GM10248 (cell line): ENCODE measurements at regions of chr17 and their contacts with region 1.

Region 1: GRCh38 chr17:63848834-63849700 is 6.6 kb upstream of the SMARCD2 start:
- DNase-seq: peak; percentile 97
- CTCF ChIP-seq: peak; percentile 84

Region 2: DNA sequence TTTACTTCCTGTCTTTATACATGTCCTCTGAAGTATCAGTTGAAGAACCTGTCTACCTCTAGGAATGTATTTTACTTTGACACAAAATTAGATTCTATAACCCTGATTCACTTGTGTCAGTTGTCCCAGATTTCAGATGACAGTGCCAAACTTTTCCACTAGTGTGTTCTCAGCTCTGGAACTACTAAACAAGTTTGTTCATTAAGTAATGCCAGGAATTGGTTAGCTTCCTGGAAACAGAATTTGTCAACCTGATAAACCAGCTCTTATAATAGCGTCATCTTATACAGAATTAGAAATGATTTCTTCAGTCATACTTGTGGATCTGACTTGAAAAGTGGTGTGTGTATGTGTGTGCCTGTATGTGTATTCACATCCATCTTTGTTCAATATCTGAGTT is 219.4 kb before region 1 on chr17:
- CTCF ChIA-PET with region 1: no interaction called
- POLR2A ChIA-PET with region 1: no interaction called
- DNase-seq: no peak
- CTCF ChIP-seq: no peak

Region 3: DNA sequence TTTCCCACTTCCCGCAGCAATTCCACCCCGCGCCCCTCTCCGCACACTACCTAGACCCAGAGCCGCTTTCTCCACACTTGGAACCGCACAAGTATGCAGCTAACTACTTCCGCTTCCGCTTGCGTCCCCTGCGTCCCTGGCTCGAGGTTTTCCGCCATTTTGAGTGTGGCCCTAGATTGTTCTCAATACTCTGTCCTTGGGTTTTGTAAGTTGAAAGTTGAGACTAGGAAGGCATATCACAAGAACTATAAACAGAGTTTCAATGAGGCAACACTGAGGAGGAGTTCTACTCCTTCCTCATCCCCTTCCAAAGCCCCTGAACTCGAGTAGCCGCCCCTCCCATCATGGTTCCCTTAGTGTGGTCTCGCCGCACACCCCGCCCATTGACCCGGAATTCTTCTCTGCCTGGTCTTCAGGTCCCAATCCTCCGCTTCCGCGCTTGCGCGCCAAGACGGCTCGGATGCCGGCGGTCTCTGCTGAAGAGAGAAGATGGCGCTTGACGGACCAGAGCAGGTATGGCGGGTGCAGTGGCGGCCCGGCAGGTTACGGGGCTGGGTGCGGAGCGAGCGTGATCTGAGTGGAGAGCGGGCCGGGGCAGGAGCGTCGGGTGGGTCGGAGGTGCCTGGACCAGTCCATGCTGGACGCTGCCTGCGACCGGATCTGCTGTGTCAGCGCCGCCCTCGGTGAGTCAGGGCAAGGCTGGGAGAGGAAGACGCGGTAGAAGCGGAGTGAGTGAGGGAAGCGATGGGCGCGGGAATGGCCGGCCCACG is 21.9 kb before region 1 on chr17 and contains the starts of genes FTSJ3 and PSMC5:
- CTCF ChIA-PET with region 1: interaction called, 12 read pairs
- POLR2A ChIA-PET with region 1: no interaction called
- DNase-seq: peak; percentile 93
- CTCF ChIP-seq: peak; percentile 72

Region 4: GRCh38 chr17:63834431-63835166 is 14.5 kb before region 1 on chr17:
- CTCF ChIA-PET with region 1: interaction called, 13 read pairs
- POLR2A ChIA-PET with region 1: no interaction called
- DNase-seq: peak; percentile 66
- CTCF ChIP-seq: peak; percentile 78

Region 5: DNA sequence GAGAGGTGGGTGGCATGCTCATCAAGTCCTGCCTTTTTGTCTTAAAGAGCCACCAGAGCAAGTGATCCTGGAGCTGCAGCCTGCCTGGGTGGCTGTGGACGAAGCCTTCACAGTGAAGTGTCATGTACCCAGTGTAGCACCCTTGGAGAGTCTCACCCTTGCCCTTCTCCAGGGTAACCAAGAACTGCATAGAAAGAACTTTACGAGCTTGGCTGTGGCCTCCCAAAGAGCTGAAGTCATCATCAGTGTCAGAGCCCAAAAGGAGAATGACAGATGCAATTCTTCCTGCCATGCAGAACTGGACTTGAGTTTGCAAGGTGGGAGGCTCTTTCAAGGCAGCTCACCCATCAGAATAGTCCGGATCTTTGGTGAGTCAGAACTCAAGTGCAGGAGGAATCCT is 10.2 kb after region 1 on chr17:
- CTCF ChIA-PET with region 1: interaction called, 137 read pairs
- POLR2A ChIA-PET with region 1: no interaction called
- DNase-seq: no peak
- CTCF ChIP-seq: no peak

Region 6: GRCh38 chr17:63946440-63947367 is 97.6 kb after region 1 on chr17:
- CTCF ChIA-PET with region 1: no interaction called
- POLR2A ChIA-PET with region 1: no interaction called
- DNase-seq: peak; percentile 90
- CTCF ChIP-seq: peak; percentile 79